Activated CD4-positive, alpha-beta T cell treated with anti-CD3 and anti-CD28 coated beads for 36 hours (primary cell): ENCODE measurements at regions of chr10 and their contacts with region 1.

Region 1: GRCh38 chr10:73413528-73414229 is at the start of gene ANXA7:
- DNase-seq: peak; percentile 97
- ATAC-seq: peak; percentile 96
- H3K4me3 Mint-ChIP-seq: peak within 1 kb of the TSS; percentile 94
- H3K27ac Mint-ChIP-seq: peak within 1 kb of the TSS; percentile 93
- H3K4me1 Mint-ChIP-seq: peaks cover 52% of the 10 kb centered on the region
- H3K27me3 Mint-ChIP-seq: peaks cover 3% of the 10 kb centered on the region
- total RNA-seq, gene ANXA7: 94.6 to 118 TPM

Region 2: GRCh38 chr10:73358331-73359279 is 55.1 kb before region 1 on chr10 and contains the start of gene CFAP70:
- CTCF ChIA-PET with region 1: interaction called, 3 read pairs
- POLR2A ChIA-PET with region 1: no interaction called
- intact Hi-C with region 1: loop called (anchors 1 to 5 kb)
- DNase-seq: peak; percentile 96
- ATAC-seq: peak; percentile 100
- H3K4me3 Mint-ChIP-seq: peak within 1 kb of the TSS; percentile 97
- H3K27ac Mint-ChIP-seq: peak within 1 kb of the TSS; percentile 84
- H3K4me1 Mint-ChIP-seq: peaks cover 14% of the 10 kb centered on the region
- H3K27me3 Mint-ChIP-seq: no peaks in the 10 kb centered on the region
- total RNA-seq, gene CFAP70: 0.58 to 0.71 TPM

Region 3: GRCh38 chr10:73480158-73480557 is 66.5 kb after region 1 on chr10:
- CTCF ChIA-PET with region 1: no interaction called
- POLR2A ChIA-PET with region 1: no interaction called
- intact Hi-C with region 1: loop called in 1 of 2 experiments (anchors 1 kb)
- DNase-seq: no peak
- ATAC-seq: peak; percentile 81
- H3K4me3 Mint-ChIP-seq: no peak overlapping the region
- H3K27ac Mint-ChIP-seq: no peak overlapping the region
- H3K4me1 Mint-ChIP-seq: peaks cover 31% of the 10 kb centered on the region
- H3K27me3 Mint-ChIP-seq: no peaks in the 10 kb centered on the region